ENCODE measurements at regions of chr17 and their contacts with region 1.

Region 1: DNA sequence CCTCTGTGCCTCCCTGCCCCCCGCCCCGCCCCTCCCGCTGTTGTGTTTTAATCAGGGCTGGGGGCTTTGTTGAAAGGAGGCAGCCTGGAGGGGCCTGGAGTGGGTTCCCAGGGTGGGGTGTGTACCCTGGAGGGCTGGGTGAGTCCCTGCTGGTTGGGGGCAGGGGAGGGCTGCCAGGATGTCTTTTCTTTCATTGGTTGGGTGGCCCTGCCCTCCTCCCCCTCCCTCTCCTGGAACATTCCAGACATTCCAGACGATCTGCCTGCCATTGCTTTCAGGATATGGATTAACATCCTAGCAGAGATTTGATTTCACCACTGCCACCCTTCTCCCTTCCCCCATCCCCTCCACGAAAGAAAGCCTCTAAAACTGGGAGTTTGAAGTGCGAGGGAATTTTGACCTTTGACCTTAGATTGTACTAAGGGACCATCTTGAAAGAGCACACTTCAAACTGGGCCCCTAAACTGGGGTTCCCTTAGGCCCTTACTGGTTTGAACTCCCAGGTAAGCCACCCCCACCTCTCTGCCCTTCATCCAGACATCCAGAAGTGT is 25.3 kb downstream of the IGF2BP1 start:
- DNase-seq: no peak
- ATAC-seq: peak; percentile 42
- H3K4me3 ChIP-seq: no peak overlapping the region
- H3K27ac ChIP-seq: peak overlapping the region; percentile 37
- H3K4me1 ChIP-seq: peaks cover 18% of the 10 kb centered on the region
- H3K27me3 ChIP-seq: no peaks in the 10 kb centered on the region
- CTCF ChIP-seq: no peak

Region 2: DNA sequence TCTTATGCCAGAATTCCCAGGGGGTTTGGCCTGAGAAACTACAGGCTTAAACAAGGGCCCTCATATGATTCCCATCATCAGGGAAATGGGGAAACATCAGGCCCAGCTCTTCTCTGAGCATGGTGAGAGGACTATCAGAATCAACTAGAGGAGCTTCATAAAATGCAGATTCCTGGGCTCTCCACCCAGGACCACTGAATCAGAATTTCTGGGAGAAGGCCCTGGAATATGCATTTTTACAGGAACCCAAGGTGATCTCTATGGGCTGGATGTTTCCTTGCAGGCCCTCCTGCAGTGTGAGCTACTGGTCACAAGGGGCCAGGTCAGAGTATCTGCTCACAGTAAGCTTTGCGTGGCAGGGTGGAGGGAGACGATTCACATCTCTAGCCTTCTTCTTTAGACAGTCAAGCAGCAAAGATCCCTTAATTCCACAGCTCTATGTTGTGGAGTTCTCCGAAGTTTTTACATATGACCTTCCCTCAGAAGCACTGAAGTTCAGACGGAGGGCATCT is 255.1 kb before region 1 on chr17:
- CTCF ChIA-PET with region 1: interaction called, 13 read pairs
- POLR2A ChIA-PET with region 1: no interaction called
- in situ Hi-C with region 1: no loop called
- intact Hi-C with region 1: no loop called
- DNase-seq: no peak
- ATAC-seq: peak; percentile 78
- H3K4me3 ChIP-seq: no peak overlapping the region
- H3K27ac ChIP-seq: no peak overlapping the region
- H3K4me1 ChIP-seq: no peaks in the 10 kb centered on the region
- H3K27me3 ChIP-seq: no peaks in the 10 kb centered on the region
- CTCF ChIP-seq: no peak

Region 3: GRCh38 chr17:48791128-48792032 is 231.1 kb before region 1 on chr17:
- CTCF ChIA-PET with region 1: no interaction called
- POLR2A ChIA-PET with region 1: no interaction called
- in situ Hi-C with region 1: no loop called
- intact Hi-C with region 1: no loop called
- DNase-seq: peak; percentile 75
- ATAC-seq: peak; percentile 95
- H3K4me3 ChIP-seq: peak overlapping the region; percentile 7 to 23; a peak in 3 of 4 replicates
- H3K27ac ChIP-seq: peak overlapping the region; percentile 73
- H3K4me1 ChIP-seq: peaks cover 23% of the 10 kb centered on the region
- H3K27me3 ChIP-seq: no peaks in the 10 kb centered on the region
- CTCF ChIP-seq: peak; percentile 96

Region 4: DNA sequence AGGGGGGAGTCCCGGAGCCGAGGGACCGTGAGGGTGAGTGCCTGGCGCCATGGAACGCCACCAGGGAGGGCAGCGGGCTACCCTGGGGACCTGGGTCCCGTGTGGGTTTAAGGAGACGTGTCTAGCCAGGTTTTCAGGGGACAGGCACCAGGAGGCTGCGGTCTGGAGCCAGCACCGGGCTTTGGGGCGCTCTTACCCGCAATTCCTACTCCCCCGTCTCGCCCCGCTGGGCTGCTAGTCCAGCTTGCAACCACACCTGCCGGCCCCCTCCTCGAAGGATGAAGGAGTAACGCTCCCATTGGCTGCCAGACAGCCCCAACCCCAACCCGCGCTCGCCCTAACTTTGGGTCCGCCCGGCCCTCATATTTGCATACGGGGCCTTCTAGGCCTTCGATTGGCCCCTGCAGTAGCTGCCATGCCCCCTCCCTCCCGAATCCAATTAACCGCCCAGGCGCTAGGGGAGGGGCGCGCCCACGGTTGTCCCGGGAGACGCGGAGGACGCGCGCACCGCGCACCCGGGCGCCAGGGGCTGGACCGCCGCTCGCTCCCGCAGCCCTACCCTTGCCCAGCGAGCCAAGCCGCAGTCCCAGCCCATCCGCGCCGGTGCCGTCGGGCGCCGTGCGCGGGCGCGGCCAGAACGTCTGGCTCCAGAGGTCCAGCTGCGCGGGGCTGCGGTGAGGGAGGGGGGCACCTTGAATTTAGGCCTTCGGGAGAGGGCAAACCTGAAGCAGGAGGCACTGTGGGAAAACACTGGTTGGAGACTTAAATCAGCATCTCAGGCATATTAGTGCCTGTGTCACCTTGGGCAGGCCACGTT is 205.5 kb before region 1 on chr17 and contains the start of gene TTLL6:
- CTCF ChIA-PET with region 1: no interaction called
- POLR2A ChIA-PET with region 1: interaction called, 13 read pairs
- in situ Hi-C with region 1: no loop called
- intact Hi-C with region 1: no loop called
- DNase-seq: no peak
- ATAC-seq: peak; percentile 93
- H3K4me3 ChIP-seq: peak within 1 kb of the TSS; percentile 47 to 63
- H3K27ac ChIP-seq: peak within 1 kb of the TSS; percentile 25; the same call in 1 of the 2 replicates
- H3K4me1 ChIP-seq: peaks cover 16% of the 10 kb centered on the region
- H3K27me3 ChIP-seq: peaks cover 8% of the 10 kb centered on the region; the same call in 1 of the 2 replicates
- CTCF ChIP-seq: no peak
- total RNA-seq, gene TTLL6: 2.5 TPM

Region 5: GRCh38 chr17:48908047-48908843 is 114.2 kb before region 1 on chr17 and contains the start of gene UBE2Z:
- CTCF ChIA-PET with region 1: no interaction called
- POLR2A ChIA-PET with region 1: no interaction called
- in situ Hi-C with region 1: no loop called
- intact Hi-C with region 1: no loop called
- DNase-seq: peak; percentile 91
- ATAC-seq: peak; percentile 95
- H3K4me3 ChIP-seq: peak within 1 kb of the TSS; percentile 62 to 86
- H3K27ac ChIP-seq: peak within 1 kb of the TSS; percentile 94
- H3K4me1 ChIP-seq: peaks cover 37% of the 10 kb centered on the region
- H3K27me3 ChIP-seq: no peaks in the 10 kb centered on the region
- CTCF ChIP-seq: no peak; the same call in 1 of the 2 replicates
- total RNA-seq, gene UBE2Z: 223 TPM

Region 6: GRCh38 chr17:48954300-48954755 is 68.1 kb before region 1 on chr17:
- CTCF ChIA-PET with region 1: interaction called, 3 read pairs
- POLR2A ChIA-PET with region 1: interaction called, 11 read pairs
- in situ Hi-C with region 1: no loop called
- intact Hi-C with region 1: no loop called
- DNase-seq: no peak
- ATAC-seq: peak; percentile 93
- H3K4me3 ChIP-seq: no peak overlapping the region
- H3K27ac ChIP-seq: no peak overlapping the region
- H3K4me1 ChIP-seq: peaks cover 13% of the 10 kb centered on the region
- H3K27me3 ChIP-seq: no peaks in the 10 kb centered on the region
- CTCF ChIP-seq: peak; percentile 95

Region 7: GRCh38 chr17:50101346-50102163 is 1079.1 kb after region 1 on chr17:
- CTCF ChIA-PET with region 1: no interaction called
- POLR2A ChIA-PET with region 1: interaction called, 10 read pairs
- in situ Hi-C with region 1: no loop called
- intact Hi-C with region 1: no loop called
- DNase-seq: no peak
- ATAC-seq: peak; percentile 63
- H3K4me3 ChIP-seq: no peak overlapping the region
- H3K27ac ChIP-seq: no peak overlapping the region
- H3K4me1 ChIP-seq: peaks cover 25% of the 10 kb centered on the region
- H3K27me3 ChIP-seq: no peaks in the 10 kb centered on the region
- CTCF ChIP-seq: no peak